Heart left ventricle (tissue), 16 donors: ENCODE measurements at regions of chr22 and their contacts with region 1.

Region 1: GRCh38 chr22:37486224-37486845 is at the start of gene MFNG:
- DNase-seq: peak; percentile 75 to 90 (median 79)
- ATAC-seq: peak; percentile 44 to 78 (median 75)
- H3K4me3 ChIP-seq: peak within 1 kb of the TSS; percentile 7 to 77 (median 52)
- H3K27ac ChIP-seq: peak within 1 kb of the TSS; percentile 55 to 97 (median 84)
- H3K4me1 ChIP-seq: peaks cover 0 to 40% (median 17%) of the 10 kb centered on the region in 12 donors
- H3K27me3 ChIP-seq: peaks cover 0 to 18% (median 0%) of the 10 kb centered on the region in 9 donors
- CTCF ChIP-seq: no peak
- POLR2A ChIP-seq: peak in 1 of 2 donors; percentile 56
- total RNA-seq, gene MFNG: 5.8 to 25.6 (median 9.6) TPM

Region 2: GRCh38 chr22:37033605-37034430 is 452.5 kb before region 1 on chr22:
- intact Hi-C with region 1: no loop called
- DNase-seq: no peak
- ATAC-seq: no peak
- H3K4me3 ChIP-seq: no peak overlapping the region
- H3K27ac ChIP-seq: no peak overlapping the region
- H3K4me1 ChIP-seq: no peaks in the 10 kb centered on the region
- H3K27me3 ChIP-seq: peaks cover 0 to 17% (median 3%) of the 10 kb centered on the region in 9 donors
- CTCF ChIP-seq: no peak
- POLR2A ChIP-seq: no peak

Region 3: DNA sequence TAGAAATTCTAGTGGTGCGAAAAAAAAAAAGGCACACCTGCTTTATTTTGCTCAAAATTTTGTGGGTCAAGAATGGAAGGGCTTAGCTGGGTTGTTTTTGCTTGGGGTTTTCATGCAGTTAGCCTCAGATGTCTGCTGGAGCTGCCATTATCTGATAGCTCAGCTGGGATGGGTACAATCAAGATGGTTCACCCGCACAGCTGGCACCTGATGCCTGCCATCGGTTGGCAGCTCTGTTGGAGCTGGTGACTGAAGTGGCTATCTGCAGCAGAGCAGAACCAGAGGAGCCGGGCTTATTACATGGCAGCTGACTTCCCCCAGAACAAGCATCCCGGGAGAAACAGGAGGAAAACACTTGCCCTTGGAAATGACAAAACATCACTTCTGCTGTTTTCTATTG is 47.0 kb before region 1 on chr22:
- intact Hi-C with region 1: loop called in 1 of 10 experiments (anchors 5 kb)
- DNase-seq: peak in 1 of 5 donors; percentile 13
- ATAC-seq: no peak
- H3K4me3 ChIP-seq: no peak overlapping the region
- H3K27ac ChIP-seq: no peak overlapping the region
- H3K4me1 ChIP-seq: no peaks in the 10 kb centered on the region
- H3K27me3 ChIP-seq: peaks cover 0 to 25% (median 3%) of the 10 kb centered on the region in 9 donors
- CTCF ChIP-seq: no peak
- POLR2A ChIP-seq: no peak

Region 4: DNA sequence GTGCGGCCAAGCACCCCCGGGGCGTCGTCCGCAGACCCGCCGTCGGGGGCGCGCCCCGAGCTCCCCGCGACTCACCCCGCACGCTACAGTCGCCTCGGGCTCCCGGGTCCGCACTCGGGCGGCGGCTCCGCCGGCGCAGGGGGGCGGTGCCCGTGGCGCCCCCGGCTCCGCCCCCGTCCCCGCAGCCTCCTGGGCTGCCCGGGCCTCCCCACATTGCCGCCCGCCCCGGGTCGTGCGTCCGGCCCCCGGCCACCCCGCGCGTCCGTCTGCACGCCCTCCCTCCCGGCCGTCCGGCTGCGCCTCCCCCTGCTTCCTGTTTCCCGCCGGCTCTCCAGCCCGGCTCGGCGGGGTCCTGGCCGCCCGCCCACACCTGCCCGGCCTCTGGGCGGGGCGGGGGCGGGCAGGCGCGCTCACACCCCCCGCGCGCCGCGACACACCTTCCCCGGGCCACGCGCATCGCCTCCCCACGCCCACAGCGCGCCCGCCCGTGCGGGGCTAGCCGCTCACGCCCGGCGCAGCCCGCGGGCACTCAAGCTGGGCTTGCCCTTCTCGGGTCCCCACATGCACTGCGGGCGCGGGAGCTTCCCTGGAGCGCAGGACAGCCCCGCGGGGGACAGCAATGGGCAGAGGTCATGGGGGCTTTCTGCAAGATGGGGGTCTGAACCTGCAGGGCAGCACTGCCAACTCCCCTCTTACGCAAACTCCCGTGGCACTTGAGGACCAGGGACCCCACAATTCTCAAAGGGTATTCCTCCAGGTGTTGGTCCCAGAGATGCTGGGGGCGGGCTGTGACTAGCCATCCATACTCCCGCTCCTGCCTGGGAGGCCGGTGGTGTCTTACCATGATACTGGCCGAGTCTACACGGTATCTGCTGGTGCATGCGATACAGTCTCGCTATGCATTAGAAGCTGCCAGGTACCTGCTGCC is 33.2 kb after region 1 on chr22 and contains the start of gene CARD10:
- intact Hi-C with region 1: loop called in 1 of 10 experiments (anchors 5 kb)
- DNase-seq: peak in 3 of 5 donors; percentile 50 to 76 (median 71)
- ATAC-seq: peak; percentile 21 to 70 (median 65)
- H3K4me3 ChIP-seq: peak within 1 kb of the TSS; percentile 42 to 93 (median 66)
- H3K27ac ChIP-seq: peak within 1 kb of the TSS; percentile 60 to 91 (median 86)
- H3K4me1 ChIP-seq: peaks cover 0 to 22% (median 16%) of the 10 kb centered on the region in 12 donors
- H3K27me3 ChIP-seq: peaks cover 0 to 32% (median 16%) of the 10 kb centered on the region in 9 donors
- CTCF ChIP-seq: no peak
- POLR2A ChIP-seq: peak in 1 of 2 donors; percentile 14
- total RNA-seq, gene CARD10: 5.2 to 12.6 (median 8.1) TPM